Right ventricle myocardium superior (tissue), 1 donor: ENCODE measurements at regions of chr3 and their contacts with region 1.

Region 1: GRCh38 chr3:195522254-195523023 is 20.7 kb downstream of the PPP1R2 start:
- DNase-seq: no peak
- ATAC-seq: no peak

Region 2: GRCh38 chr3:194675081-194675640 is 847.3 kb before region 1 on chr3:
- intact Hi-C with region 1: loop called (anchors 5 kb)
- DNase-seq: no peak
- ATAC-seq: no peak

Region 3: GRCh38 chr3:195274259-195274966 is 248.0 kb before region 1 on chr3:
- intact Hi-C with region 1: loop called (anchors 2 kb)
- DNase-seq: no peak
- ATAC-seq: no peak

Region 4: GRCh38 chr3:195690951-195691490 is 168.6 kb after region 1 on chr3:
- intact Hi-C with region 1: no loop called
- DNase-seq: no peak
- ATAC-seq: no peak